Endothelial cell of umbilical vein (primary cell): ENCODE measurements at regions of chr7 and their contacts with region 1.

Region 1: GRCh38 chr7:36291387-36292316 is 98.0 kb upstream of the ANLN start:
- DNase-seq: peak; percentile 87
- H3K4me3 ChIP-seq: peak overlapping the region; percentile 10 to 51 (median 19)
- H3K27ac ChIP-seq: peak overlapping the region; percentile 57
- H3K4me1 ChIP-seq: peaks cover 7% of the 10 kb centered on the region
- H3K27me3 ChIP-seq: no peaks in the 10 kb centered on the region
- CTCF ChIP-seq: peak; percentile 92 to 96
- POLR2A ChIP-seq: no peak

Region 2: GRCh38 chr7:35975851-35976454 is 315.7 kb before region 1 on chr7:
- CTCF ChIA-PET with region 1: interaction called, 13 read pairs
- POLR2A ChIA-PET with region 1: no interaction called
- dilution Hi-C with region 1: no loop called
- intact Hi-C with region 1: no loop called
- DNase-seq: peak; percentile 78
- H3K4me3 ChIP-seq: no peak overlapping the region
- H3K27ac ChIP-seq: no peak overlapping the region
- H3K4me1 ChIP-seq: no peaks in the 10 kb centered on the region
- H3K27me3 ChIP-seq: peaks cover 3 to 7% of the 10 kb centered on the region in 2 experiments
- CTCF ChIP-seq: peak; percentile 55 to 69
- POLR2A ChIP-seq: no peak

Region 3: GRCh38 chr7:36021367-36021766 is 270.3 kb before region 1 on chr7:
- CTCF ChIA-PET with region 1: interaction called, 10 read pairs
- POLR2A ChIA-PET with region 1: no interaction called
- dilution Hi-C with region 1: no loop called
- intact Hi-C with region 1: loop called (anchors 1 kb)
- DNase-seq: peak; percentile 23
- H3K4me3 ChIP-seq: no peak overlapping the region
- H3K27ac ChIP-seq: no peak overlapping the region
- H3K4me1 ChIP-seq: no peaks in the 10 kb centered on the region
- H3K27me3 ChIP-seq: peaks cover 9 to 24% of the 10 kb centered on the region in 2 experiments
- CTCF ChIP-seq: peak; percentile 46 to 53
- POLR2A ChIP-seq: no peak

Region 4: GRCh38 chr7:36128448-36129047 is 163.1 kb before region 1 on chr7:
- CTCF ChIA-PET with region 1: interaction called, 3 read pairs
- POLR2A ChIA-PET with region 1: no interaction called
- dilution Hi-C with region 1: no loop called
- intact Hi-C with region 1: loop called (anchors 1 kb)
- DNase-seq: peak; percentile 92
- H3K4me3 ChIP-seq: peak overlapping the region in 1 of 3 experiments; percentile 9
- H3K27ac ChIP-seq: no peak overlapping the region
- H3K4me1 ChIP-seq: no peaks in the 10 kb centered on the region
- H3K27me3 ChIP-seq: no peaks in the 10 kb centered on the region
- CTCF ChIP-seq: peak; percentile 43 to 60
- POLR2A ChIP-seq: no peak

Region 5: DNA sequence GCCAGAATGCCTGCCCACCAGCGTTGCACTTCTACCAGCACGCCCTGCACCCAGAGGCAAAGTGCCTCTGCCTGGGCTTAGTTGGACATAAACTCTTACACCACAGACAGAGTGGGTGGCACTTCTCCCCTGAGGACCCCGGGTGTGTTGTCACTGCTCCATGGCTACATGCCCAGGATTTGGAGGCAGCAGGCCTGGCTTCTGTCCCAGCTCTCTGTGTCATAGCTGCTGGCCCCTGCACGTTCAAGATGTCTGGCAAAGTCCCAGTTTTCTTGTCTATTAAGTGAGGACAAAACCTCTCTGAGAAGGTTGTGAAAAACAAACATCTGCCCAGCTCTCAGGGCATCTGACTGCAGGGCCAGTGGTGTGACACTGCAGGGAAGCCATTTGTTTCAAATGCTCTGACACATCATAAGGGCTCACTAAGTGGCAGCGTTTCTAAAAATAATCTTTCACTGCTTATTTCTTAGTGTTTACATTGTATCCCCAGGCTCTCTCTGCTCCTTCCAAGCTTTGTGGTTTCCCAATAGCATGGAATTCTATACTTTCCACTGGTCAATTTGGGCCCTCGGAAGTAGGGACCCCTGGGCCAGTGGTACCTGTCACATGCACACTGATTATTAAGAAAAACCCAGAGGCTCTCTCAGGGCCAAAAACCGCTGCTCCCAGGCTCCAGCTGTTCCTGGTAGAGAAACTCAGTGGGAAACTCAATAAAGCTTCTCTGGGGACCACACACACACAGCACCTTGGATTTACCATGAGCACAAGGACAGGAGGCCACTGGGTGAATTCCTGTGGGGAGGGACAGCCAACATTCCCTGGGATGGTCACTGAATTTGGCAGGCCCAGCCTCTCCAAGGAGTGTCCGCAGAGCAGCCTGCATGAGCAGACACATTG is 11.8 kb after region 1 on chr7:
- CTCF ChIA-PET with region 1: interaction called, 29 read pairs
- POLR2A ChIA-PET with region 1: no interaction called
- dilution Hi-C with region 1: no loop called
- intact Hi-C with region 1: no loop called
- DNase-seq: peak; percentile 54
- H3K4me3 ChIP-seq: no peak overlapping the region
- H3K27ac ChIP-seq: peak overlapping the region; percentile 33
- H3K4me1 ChIP-seq: peaks cover 28% of the 10 kb centered on the region
- H3K27me3 ChIP-seq: no peaks in the 10 kb centered on the region
- CTCF ChIP-seq: no peak
- POLR2A ChIP-seq: no peak

Region 6: DNA sequence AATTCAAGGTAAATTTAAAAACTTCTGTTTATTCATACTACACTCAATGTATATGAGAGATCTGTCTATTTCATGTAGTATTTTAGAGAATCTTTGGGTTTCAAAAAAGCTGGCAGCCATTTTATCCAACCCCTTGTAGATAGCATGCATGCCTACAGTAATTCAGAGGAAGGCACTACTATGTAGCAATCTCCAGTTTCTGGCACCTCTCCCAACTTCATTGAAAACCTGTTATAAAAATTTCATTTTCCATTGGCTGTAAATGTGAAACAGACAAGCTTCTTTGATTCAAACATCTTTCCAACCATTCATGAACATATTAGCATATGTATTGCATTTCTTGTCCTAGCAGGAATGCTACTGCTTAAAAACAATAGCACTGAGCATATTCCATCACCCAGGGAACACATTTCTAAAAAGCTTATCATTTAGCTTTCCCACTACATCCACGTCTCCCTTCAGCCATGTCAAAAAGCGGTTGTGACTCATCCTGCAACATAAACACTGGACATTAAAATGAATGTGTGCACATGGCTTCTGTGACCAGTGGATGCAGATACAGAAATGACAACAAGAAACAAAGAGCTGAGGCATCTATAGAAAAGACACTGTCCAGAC is 763.1 kb after region 1 on chr7:
- CTCF ChIA-PET with region 1: no interaction called
- POLR2A ChIA-PET with region 1: no interaction called
- dilution Hi-C with region 1: no loop called
- intact Hi-C with region 1: no loop called
- DNase-seq: peak; percentile 42
- H3K4me3 ChIP-seq: no peak overlapping the region
- H3K27ac ChIP-seq: no peak overlapping the region
- H3K4me1 ChIP-seq: peaks cover 11% of the 10 kb centered on the region
- H3K27me3 ChIP-seq: no peaks in the 10 kb centered on the region
- CTCF ChIP-seq: no peak
- POLR2A ChIP-seq: no peak